GM12878 (cell line): ENCODE measurements at regions of chr5 and their contacts with region 1.

Region 1: DNA sequence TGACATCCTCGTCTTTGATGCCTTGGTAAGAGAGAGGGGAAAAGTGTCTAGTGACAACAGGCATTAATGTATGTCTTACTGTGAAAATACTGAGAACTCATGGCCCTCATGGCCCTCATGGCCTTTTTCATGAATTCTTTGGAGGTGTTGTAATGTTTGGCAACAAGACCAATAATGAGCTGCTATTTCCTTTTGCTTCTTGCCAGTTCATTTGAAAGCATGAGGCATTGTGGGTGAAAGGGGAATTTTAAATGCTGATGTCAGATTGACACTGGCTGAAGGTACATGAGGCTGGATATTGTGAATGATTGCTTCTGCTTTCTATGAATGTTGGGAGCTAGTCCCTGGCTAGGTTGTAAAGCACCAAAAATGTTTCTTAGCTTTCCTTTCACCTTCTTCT is 79.2 kb downstream of the DOCK2 start:
- DNase-seq: no peak
- ATAC-seq: peak; percentile 11; the same call in 2 of the 3 replicates
- H3K4me3 ChIP-seq: no peak overlapping the region
- H3K27ac ChIP-seq: peak overlapping the region; percentile 22
- H3K4me1 ChIP-seq: peaks cover 17% of the 10 kb centered on the region
- H3K27me3 ChIP-seq: no peaks in the 10 kb centered on the region
- CTCF ChIP-seq: no peak
- EP300 ChIP-seq: no peak; a peak in 1 of 4 replicates
- POLR2A ChIP-seq: no peak
- RAD21 ChIP-seq: no peak

Region 2: GRCh38 chr5:169732841-169733240 is 16.6 kb after region 1 on chr5:
- CTCF ChIA-PET with region 1: interaction called, 10 read pairs
- POLR2A ChIA-PET with region 1: interaction called, 7 read pairs
- RAD21 ChIA-PET with region 1: interaction called, 4 read pairs
- SMC1A ChIA-PET with region 1: interaction called, 315 read pairs
- in situ Hi-C with region 1: no loop called
- intact Hi-C with region 1: no loop called
- DNase-seq: no peak
- ATAC-seq: no peak
- H3K4me3 ChIP-seq: no peak overlapping the region
- H3K27ac ChIP-seq: no peak overlapping the region
- H3K4me1 ChIP-seq: peaks cover 6% of the 10 kb centered on the region; the same call in 1 of the 2 replicates
- H3K27me3 ChIP-seq: no peaks in the 10 kb centered on the region
- CTCF ChIP-seq: no peak
- EP300 ChIP-seq: no peak
- POLR2A ChIP-seq: no peak
- RAD21 ChIP-seq: no peak

Region 3: DNA sequence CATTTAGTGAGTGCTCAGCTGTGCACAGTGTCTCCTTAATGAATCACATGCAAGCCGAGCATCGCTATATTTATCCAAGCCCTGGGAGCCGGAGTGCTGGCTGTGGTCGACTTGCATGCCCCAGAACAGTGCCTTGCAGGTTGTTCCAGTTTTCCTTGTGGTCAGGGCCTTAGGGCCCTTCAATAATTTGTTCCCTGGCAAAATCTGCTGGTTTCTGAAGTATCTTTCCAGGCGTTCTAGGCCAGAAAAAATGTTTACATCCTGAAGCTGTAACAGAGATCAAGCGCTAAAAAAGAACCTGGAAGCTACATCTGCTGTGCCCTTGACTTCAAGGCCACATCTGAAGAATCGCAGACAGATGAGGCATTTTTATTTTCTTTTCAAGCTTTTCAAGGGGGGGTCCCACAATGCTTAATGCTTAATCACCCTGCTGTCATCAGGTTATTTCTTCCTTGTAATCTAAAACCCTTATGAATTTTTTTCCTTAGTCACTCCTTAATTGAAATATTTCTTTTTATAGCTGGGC is 26.6 kb after region 1 on chr5:
- CTCF ChIA-PET with region 1: interaction called, 5 read pairs
- POLR2A ChIA-PET with region 1: interaction called, 19 read pairs
- RAD21 ChIA-PET with region 1: interaction called, 33 read pairs
- SMC1A ChIA-PET with region 1: interaction called, 315 read pairs
- in situ Hi-C with region 1: no loop called
- intact Hi-C with region 1: no loop called
- DNase-seq: no peak
- ATAC-seq: no peak
- H3K4me3 ChIP-seq: no peak overlapping the region
- H3K27ac ChIP-seq: no peak overlapping the region
- H3K4me1 ChIP-seq: peaks cover 9% of the 10 kb centered on the region
- H3K27me3 ChIP-seq: no peaks in the 10 kb centered on the region
- CTCF ChIP-seq: no peak
- EP300 ChIP-seq: no peak
- POLR2A ChIP-seq: no peak
- RAD21 ChIP-seq: no peak

Region 4: DNA sequence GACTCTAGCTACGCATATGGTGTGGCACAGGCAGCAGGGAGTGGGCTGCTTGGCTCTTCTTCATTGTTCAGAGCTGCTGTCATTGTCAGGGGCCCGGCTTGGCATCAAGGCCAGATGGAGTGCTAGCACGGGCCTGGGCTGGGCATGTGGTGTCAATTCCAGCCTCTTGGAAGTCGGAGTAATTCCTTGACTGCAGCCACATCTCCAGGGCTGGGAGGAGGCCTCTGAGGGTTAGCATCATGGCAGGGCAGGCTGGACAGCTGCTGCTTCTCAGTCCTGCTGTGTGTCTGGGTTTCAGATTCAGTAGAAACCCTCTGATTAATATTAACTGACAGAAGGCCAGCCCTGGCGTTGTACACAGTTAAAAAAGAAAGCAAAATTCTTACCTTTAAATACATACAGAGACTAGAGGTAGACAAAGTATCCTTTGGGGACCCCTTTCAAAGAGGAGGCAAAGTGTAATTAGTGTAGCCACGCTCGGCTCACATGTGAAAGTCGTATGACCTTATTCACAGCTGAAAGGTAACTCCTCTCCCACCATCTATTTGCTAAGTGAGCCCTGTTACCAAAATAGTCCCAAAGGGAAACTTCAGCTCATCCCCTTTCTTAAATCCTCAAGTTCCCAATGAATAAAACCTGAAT is 47.2 kb after region 1 on chr5:
- CTCF ChIA-PET with region 1: interaction called, 4 read pairs
- POLR2A ChIA-PET with region 1: interaction called, 3 read pairs
- RAD21 ChIA-PET with region 1: interaction called, 19 read pairs
- SMC1A ChIA-PET with region 1: interaction called, 37 read pairs
- in situ Hi-C with region 1: no loop called
- intact Hi-C with region 1: no loop called
- DNase-seq: peak; percentile 45
- ATAC-seq: peak; percentile 87
- H3K4me3 ChIP-seq: no peak overlapping the region
- H3K27ac ChIP-seq: no peak overlapping the region
- H3K4me1 ChIP-seq: peaks cover 5% of the 10 kb centered on the region; the same call in 1 of the 2 replicates
- H3K27me3 ChIP-seq: no peaks in the 10 kb centered on the region
- CTCF ChIP-seq: no peak
- EP300 ChIP-seq: 0 out of 4 replicates have a peak, but pooled peaks of 1 of the 2 experiments have one; percentile 19
- POLR2A ChIP-seq: no peak
- RAD21 ChIP-seq: no peak